ENCODE measurements at regions of chr14 and their contacts with region 1.

Region 1: DNA sequence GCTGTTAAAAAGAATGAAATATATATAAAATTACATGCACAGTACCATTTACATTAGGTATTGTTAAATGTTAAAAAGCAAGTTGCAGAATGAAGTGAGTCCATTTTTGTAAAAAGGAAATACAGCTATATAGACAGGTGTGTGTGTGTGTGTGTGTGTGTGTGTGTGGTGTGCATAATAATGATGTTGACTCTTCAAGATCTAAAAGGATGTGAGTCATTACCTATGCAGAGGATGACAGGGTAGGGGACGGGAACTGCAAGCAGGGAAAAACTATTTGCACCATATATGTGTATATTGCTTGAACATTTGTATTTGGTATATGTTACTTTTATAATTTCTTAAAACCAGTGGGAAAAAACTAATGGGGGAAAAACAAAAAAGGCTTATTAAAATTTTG is 3.1 kb downstream of the C14orf39 start:
- DNase-seq: no peak
- H3K4me3 Mint-ChIP-seq: no peak overlapping the region
- H3K27ac Mint-ChIP-seq: no peak overlapping the region
- H3K4me1 Mint-ChIP-seq: no peaks in the 10 kb centered on the region
- H3K27me3 Mint-ChIP-seq: peaks cover 31% of the 10 kb centered on the region

Region 2: DNA sequence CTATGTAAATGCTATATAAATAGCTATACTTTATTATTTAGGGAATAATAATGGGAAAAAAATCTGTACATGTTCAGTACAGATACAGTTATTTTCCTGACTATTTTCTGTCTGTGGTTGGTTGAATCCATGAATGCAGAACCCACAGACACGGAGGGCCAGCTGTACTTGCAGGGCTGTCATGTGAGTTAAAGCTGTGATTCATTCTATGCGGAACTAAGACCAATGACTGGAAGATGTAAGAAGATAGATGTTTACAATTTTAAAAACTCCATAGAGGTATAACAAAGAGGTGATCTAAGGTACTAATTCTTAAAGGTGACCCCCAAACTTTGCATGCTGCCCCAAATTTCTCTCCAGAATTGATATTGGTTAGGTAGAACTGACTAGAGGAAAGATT is 376.4 kb before region 1 on chr14:
- intact Hi-C with region 1: no loop called
- DNase-seq: no peak
- H3K4me3 Mint-ChIP-seq: no peak overlapping the region
- H3K27ac Mint-ChIP-seq: no peak overlapping the region
- H3K4me1 Mint-ChIP-seq: peaks cover 33% of the 10 kb centered on the region
- H3K27me3 Mint-ChIP-seq: no peaks in the 10 kb centered on the region

Region 3: GRCh38 chr14:60495946-60496345 is 13.2 kb after region 1 on chr14:
- intact Hi-C with region 1: no loop called
- DNase-seq: no peak
- H3K4me3 Mint-ChIP-seq: no peak overlapping the region
- H3K27ac Mint-ChIP-seq: no peak overlapping the region
- H3K4me1 Mint-ChIP-seq: no peaks in the 10 kb centered on the region
- H3K27me3 Mint-ChIP-seq: peaks cover 2% of the 10 kb centered on the region

Region 4: GRCh38 chr14:60514741-60515491 is 32.2 kb after region 1 on chr14:
- intact Hi-C with region 1: loop called (anchors 5 kb)
- DNase-seq: no peak
- H3K4me3 Mint-ChIP-seq: no peak overlapping the region
- H3K27ac Mint-ChIP-seq: no peak overlapping the region
- H3K4me1 Mint-ChIP-seq: peaks cover 8% of the 10 kb centered on the region
- H3K27me3 Mint-ChIP-seq: peaks cover 64% of the 10 kb centered on the region

Region 5: GRCh38 chr14:60537663-60538062 is 54.9 kb after region 1 on chr14:
- intact Hi-C with region 1: no loop called
- DNase-seq: no peak
- H3K4me3 Mint-ChIP-seq: no peak overlapping the region
- H3K27ac Mint-ChIP-seq: no peak overlapping the region
- H3K4me1 Mint-ChIP-seq: no peaks in the 10 kb centered on the region
- H3K27me3 Mint-ChIP-seq: no peaks in the 10 kb centered on the region